Activated naive CD4-positive, alpha-beta T cell treated with anti-CD3 and anti-CD28 coated beads, Interleukin-2, amount 10 ng/mL, durations not matched to agents 7 days and 5 days (primary cell): ENCODE measurements at regions of chr3 and their contacts with region 1.

Region 1: DNA sequence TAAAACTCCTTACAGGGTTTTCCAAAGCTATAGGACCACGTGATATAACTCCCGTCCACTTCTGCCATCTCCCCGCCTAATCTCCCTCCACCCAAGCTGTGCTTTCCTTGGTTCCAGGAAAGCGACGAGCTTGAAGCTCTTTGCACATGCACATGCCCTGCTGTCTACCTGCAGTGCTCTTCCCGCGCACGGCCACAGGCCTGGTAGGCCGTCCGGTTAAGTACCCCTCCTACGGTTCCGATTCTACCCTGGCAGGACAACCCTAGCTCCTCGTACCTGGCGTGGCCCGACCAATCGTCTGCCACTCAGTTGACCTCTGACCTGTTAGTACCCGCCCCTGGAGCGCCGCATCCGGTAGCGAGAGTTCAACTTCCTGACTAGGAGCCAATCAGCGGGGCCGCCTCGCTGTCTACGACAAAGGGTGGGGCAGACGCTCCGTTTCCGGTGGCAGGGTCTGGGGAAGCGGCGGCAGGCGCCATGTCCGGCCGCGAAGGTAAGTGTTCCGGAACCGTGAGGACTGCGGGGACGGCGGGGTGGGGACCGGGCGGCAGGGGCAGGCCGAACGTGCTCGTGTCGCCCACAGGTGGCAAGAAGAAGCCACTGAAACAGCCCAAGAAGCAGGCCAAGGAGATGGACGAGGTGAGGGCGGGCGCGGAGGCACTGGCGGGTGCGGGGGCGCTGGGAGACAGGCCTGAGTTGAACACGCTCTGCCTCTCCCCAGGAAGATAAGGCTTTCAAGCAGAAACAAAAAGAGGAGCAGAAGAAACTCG is at the starts of genes CCDC51 and TMA7:
- DNase-seq: peak; percentile 99
- H3K4me3 Mint-ChIP-seq: peak within 1 kb of the TSS; percentile 85
- H3K27ac Mint-ChIP-seq: peak within 1 kb of the TSS; percentile 91
- H3K4me1 Mint-ChIP-seq: peaks cover 52% of the 10 kb centered on the region
- H3K27me3 Mint-ChIP-seq: no peaks in the 10 kb centered on the region

Region 2: GRCh38 chr3:48240711-48241491 is 199.1 kb before region 1 on chr3 and contains the start of gene ZNF589:
- CTCF ChIA-PET with region 1: interaction called, 19 read pairs
- DNase-seq: peak; percentile 97
- H3K4me3 Mint-ChIP-seq: peak within 1 kb of the TSS; percentile 86
- H3K27ac Mint-ChIP-seq: peak within 1 kb of the TSS; percentile 94
- H3K4me1 Mint-ChIP-seq: peaks cover 39% of the 10 kb centered on the region
- H3K27me3 Mint-ChIP-seq: no peaks in the 10 kb centered on the region

Region 3: GRCh38 chr3:48301020-48301796 is 138.8 kb before region 1 on chr3:
- CTCF ChIA-PET with region 1: interaction called, 16 read pairs
- DNase-seq: peak; percentile 93
- H3K4me3 Mint-ChIP-seq: peak within 1 kb of the TSS; percentile 85
- H3K27ac Mint-ChIP-seq: peak within 1 kb of the TSS; percentile 96
- H3K4me1 Mint-ChIP-seq: peaks cover 34% of the 10 kb centered on the region
- H3K27me3 Mint-ChIP-seq: peaks cover 7% of the 10 kb centered on the region

Region 4: GRCh38 chr3:48425218-48426075 is 14.6 kb before region 1 on chr3:
- CTCF ChIA-PET with region 1: interaction called, 40 read pairs
- DNase-seq: no peak
- H3K4me3 Mint-ChIP-seq: no peak overlapping the region
- H3K27ac Mint-ChIP-seq: no peak overlapping the region
- H3K4me1 Mint-ChIP-seq: peaks cover 11% of the 10 kb centered on the region
- H3K27me3 Mint-ChIP-seq: peaks cover 46% of the 10 kb centered on the region

Region 5: GRCh38 chr3:48507351-48508061 is 67.5 kb after region 1 on chr3:
- CTCF ChIA-PET with region 1: interaction called, 74 read pairs
- DNase-seq: peak; percentile 86
- H3K4me3 Mint-ChIP-seq: no peak overlapping the region
- H3K27ac Mint-ChIP-seq: peak overlapping the region; percentile 87
- H3K4me1 Mint-ChIP-seq: peaks cover 64% of the 10 kb centered on the region
- H3K27me3 Mint-ChIP-seq: peaks cover 32% of the 10 kb centered on the region